ENCODE measurements at regions of chr10 and their contacts with region 1.

Region 1: GRCh38 chr10:101749047-101750016 is 26.6 kb downstream of the FGF8 start:
- DNase-seq: no peak

Region 2: DNA sequence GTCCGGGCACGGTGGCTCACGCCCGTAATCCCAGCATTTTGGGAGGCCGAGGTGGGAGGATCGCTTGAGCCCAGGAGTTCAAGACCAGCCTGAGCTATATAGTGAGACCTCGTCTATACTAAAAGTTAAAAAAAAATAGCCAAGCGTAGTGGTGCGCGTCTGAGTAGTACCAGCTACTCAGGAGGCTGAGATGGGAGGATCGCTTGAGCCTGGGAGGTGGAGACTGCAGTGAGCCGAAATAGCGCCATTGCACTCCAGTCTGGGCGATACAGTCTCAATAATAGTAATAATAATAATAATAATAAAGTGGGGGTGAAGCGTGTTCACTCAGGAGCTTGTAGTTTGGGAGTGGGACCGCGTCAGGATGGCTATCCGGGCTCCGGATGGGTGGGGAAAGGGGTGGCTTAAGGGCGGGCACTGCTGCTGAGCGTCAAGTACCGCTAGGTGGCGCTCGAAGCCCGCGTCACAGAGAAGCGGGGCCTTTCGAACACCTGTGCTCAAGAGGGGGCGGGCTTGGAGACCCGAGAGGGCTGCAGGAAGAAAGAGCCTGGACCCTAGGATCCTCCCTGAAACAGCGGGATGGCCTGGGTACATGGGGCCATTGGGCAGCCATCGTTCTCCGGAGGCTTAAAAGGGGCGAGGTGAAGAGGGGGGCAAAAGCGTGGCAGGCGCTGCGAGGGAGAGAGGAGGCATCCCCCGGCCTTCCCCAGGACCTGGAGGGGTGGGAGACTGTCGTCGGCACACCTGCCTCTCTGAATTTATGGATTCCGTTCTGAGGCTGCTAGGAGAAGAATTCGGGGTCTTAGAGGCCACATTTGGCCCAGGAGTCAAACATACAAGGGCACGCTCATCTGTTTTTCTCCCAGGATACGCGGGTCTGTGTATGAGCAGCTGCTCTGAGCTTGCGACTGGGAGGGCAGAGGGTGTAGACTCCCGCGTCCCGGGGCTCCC is 534.6 kb before region 1 on chr10:
- in situ Hi-C with region 1: loop called (anchors 25 kb)
- DNase-seq: peak; percentile 76

Region 3: DNA sequence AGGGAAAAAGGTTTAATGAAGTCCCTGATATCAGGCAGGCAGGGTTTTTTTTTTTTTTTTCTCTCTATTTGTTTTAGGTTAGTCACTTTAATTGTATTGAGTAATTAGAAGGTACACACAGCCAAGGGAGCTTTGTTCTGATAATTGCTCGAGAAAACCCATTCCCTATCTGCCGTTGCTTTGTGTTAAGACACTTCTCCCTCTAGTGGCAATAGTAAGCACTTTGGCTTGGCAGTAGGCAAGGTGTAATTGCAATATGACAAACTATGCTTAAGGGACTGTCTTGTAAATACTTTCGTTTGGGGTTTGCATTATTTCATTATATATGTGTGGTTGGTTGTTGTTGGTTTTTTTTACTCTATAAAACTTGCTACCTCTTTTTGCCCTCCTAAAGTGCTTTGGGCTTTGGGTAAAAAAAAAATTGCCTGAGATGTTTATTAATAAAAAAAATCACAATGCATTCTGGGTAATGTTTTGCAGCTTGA is 282.0 kb before region 1 on chr10:
- in situ Hi-C with region 1: no loop called
- DNase-seq: peak; percentile 72

Measured in KBM-7 (cell line).